IMR-90 (cell line): ENCODE measurements at regions of chr2 and their contacts with region 1.

Region 1: DNA sequence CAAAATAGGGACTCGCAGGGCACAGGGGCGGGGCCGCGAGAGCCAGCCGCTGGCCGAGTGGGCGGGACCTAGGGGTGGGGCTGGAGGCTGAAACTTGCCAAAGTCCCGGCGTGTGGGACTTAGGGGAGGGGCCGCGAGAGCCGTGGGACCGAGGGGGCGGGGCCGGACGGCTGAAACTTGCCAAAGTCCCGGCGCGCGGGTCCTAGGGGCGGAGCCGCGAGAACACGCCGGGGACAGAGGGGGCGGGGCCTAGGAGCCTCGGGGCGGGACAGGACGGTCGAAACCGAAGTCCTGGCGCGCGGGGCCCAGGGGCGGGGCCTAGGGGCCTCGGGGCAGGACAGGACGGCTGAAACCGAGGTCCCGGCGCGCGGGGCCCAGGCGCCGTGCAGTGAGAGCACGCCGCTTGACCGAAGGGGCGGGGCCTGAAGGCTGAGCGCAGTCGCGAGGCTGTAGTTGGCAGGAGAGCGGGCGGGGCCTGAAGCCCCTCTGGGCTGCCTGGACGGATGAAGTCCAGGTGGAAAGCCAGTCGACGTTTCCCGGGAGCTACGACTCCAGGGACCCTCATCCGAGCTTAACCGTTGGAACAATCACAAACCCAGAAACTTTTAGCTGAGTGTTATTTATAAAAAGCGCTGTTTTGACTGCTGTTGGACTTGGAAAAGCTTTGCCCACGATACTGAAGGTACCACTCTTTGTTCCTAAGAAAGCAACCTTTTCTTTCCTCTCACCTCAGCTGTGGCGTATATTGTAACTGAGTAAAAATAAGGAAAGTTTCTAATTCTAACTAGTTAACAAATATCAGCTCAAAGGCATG is 475 bp upstream of the BARD1 start:
- DNase-seq: peak; percentile 97
- ATAC-seq: peak; percentile 96
- H3K4me3 ChIP-seq: peak overlapping the region; percentile 99
- H3K27ac ChIP-seq: peak overlapping the region; percentile 27
- H3K4me1 ChIP-seq: peaks cover 2% of the 10 kb centered on the region; the same call in 1 of the 2 replicates
- H3K27me3 ChIP-seq: no peaks in the 10 kb centered on the region
- CTCF ChIP-seq: no peak
- POLR2A ChIP-seq: no peak
- RAD21 ChIP-seq: no peak

Region 2: DNA sequence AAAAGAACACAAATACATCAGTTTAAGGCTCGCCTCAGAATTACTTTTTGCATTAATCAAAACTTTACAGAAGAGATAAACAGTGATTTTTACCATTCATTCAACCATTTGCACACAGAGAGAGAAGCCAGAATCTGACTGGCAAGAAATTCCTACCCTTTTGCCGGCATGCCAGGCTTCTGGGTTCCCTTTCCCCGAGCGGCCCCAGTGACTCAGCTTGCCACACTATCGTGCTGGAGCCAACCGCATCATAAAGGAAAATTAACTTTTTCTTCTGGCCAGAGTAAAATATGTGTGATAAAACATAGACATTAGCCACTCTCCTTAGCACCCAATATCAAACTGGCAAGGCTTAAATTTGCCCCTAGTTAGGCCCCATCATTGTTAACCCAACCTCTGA is 1596.8 kb before region 1 on chr2:
- CTCF ChIA-PET with region 1: no interaction called
- POLR2A ChIA-PET with region 1: interaction called, 11 read pairs
- dilution Hi-C with region 1: no loop called
- in situ Hi-C with region 1: no loop called
- intact Hi-C with region 1: no loop called
- DNase-seq: no peak
- ATAC-seq: no peak
- H3K4me3 ChIP-seq: no peak overlapping the region
- H3K27ac ChIP-seq: no peak overlapping the region
- H3K4me1 ChIP-seq: no peaks in the 10 kb centered on the region
- H3K27me3 ChIP-seq: no peaks in the 10 kb centered on the region
- CTCF ChIP-seq: no peak
- POLR2A ChIP-seq: no peak
- RAD21 ChIP-seq: no peak

Region 3: GRCh38 chr2:213806125-213806726 is 1003.7 kb before region 1 on chr2:
- CTCF ChIA-PET with region 1: no interaction called
- POLR2A ChIA-PET with region 1: no interaction called
- dilution Hi-C with region 1: no loop called
- in situ Hi-C with region 1: loop called (anchors 25 kb)
- intact Hi-C with region 1: loop called (anchors 5 kb)
- DNase-seq: peak; percentile 38
- ATAC-seq: no peak; the same call in 1 of the 2 replicates
- H3K4me3 ChIP-seq: no peak overlapping the region
- H3K27ac ChIP-seq: no peak overlapping the region
- H3K4me1 ChIP-seq: no peaks in the 10 kb centered on the region
- H3K27me3 ChIP-seq: no peaks in the 10 kb centered on the region
- CTCF ChIP-seq: peak; percentile 48
- POLR2A ChIP-seq: no peak
- RAD21 ChIP-seq: peak; percentile 59

Region 4: DNA sequence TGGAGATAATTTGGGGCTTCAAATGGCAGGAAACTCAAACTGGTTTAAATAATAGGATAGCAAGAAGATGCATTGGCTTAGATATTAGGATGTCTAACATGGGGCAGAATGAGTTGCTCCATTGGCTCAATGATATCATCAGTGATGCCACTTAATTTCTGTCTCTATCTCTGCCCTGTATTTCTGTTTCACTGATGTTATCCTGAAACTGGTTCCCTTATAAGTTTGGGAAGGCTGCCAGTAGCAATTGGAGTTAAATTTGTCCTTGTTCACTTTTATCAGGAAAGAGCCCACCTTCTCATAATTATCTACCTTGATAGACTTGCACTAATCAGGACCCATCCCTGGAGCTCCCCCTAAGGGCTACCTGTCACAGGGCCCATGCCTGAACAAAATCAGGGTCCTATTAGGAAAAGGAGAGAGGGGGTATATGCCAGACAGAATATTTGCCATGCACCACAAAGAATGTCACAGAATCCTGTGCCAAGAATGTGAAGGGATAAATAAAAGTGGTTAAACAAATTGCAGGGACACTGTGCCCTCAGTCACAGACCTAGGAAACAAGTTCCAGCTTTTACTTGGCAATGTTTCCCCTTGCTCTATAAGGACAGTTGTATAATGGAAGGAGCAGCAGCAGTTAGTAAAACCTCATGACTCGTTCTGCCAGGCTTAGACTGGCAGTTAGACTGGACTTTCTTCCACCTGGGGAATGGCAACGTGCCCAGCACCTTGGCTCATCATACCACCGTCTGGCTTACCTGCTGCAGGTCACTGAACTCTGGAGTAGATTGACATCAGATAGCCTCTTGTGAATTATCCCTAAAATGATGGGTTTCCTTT is 431.5 kb before region 1 on chr2:
- CTCF ChIA-PET with region 1: no interaction called
- POLR2A ChIA-PET with region 1: no interaction called
- dilution Hi-C with region 1: no loop called
- in situ Hi-C with region 1: no loop called
- intact Hi-C with region 1: no loop called
- DNase-seq: no peak
- ATAC-seq: no peak
- H3K4me3 ChIP-seq: no peak overlapping the region
- H3K27ac ChIP-seq: no peak overlapping the region
- H3K4me1 ChIP-seq: no peaks in the 10 kb centered on the region
- H3K27me3 ChIP-seq: no peaks in the 10 kb centered on the region
- CTCF ChIP-seq: no peak
- POLR2A ChIP-seq: no peak
- RAD21 ChIP-seq: no peak

Region 5: GRCh38 chr2:214436470-214436869 is 373.5 kb before region 1 on chr2:
- CTCF ChIA-PET with region 1: no interaction called
- POLR2A ChIA-PET with region 1: no interaction called
- dilution Hi-C with region 1: no loop called
- in situ Hi-C with region 1: no loop called
- intact Hi-C with region 1: loop called (anchors 10 kb)
- DNase-seq: no peak
- ATAC-seq: no peak
- H3K4me3 ChIP-seq: no peak overlapping the region
- H3K27ac ChIP-seq: no peak overlapping the region
- H3K4me1 ChIP-seq: no peaks in the 10 kb centered on the region
- H3K27me3 ChIP-seq: no peaks in the 10 kb centered on the region
- CTCF ChIP-seq: 0 out of 2 replicates have a peak, but pooled peaks have one; percentile 2
- POLR2A ChIP-seq: no peak
- RAD21 ChIP-seq: 0 out of 2 replicates have a peak, but pooled peaks have one; percentile 6

Region 6: GRCh38 chr2:214543386-214543965 is 266.5 kb before region 1 on chr2:
- CTCF ChIA-PET with region 1: no interaction called
- POLR2A ChIA-PET with region 1: no interaction called
- dilution Hi-C with region 1: no loop called
- in situ Hi-C with region 1: no loop called
- intact Hi-C with region 1: loop called (anchors 2 kb)
- DNase-seq: peak; percentile 66
- ATAC-seq: peak; percentile 65
- H3K4me3 ChIP-seq: no peak overlapping the region
- H3K27ac ChIP-seq: peak overlapping the region; percentile 37; the same call in 1 of the 2 replicates
- H3K4me1 ChIP-seq: peaks cover 6% of the 10 kb centered on the region
- H3K27me3 ChIP-seq: no peaks in the 10 kb centered on the region
- CTCF ChIP-seq: no peak
- POLR2A ChIP-seq: no peak
- RAD21 ChIP-seq: no peak

Region 7: GRCh38 chr2:214740868-214741395 is 69.0 kb before region 1 on chr2:
- CTCF ChIA-PET with region 1: interaction called, 6 read pairs
- POLR2A ChIA-PET with region 1: no interaction called
- dilution Hi-C with region 1: no loop called
- in situ Hi-C with region 1: no loop called
- intact Hi-C with region 1: loop called (anchors 5 kb)
- DNase-seq: no peak
- ATAC-seq: no peak
- H3K4me3 ChIP-seq: no peak overlapping the region
- H3K27ac ChIP-seq: no peak overlapping the region
- H3K4me1 ChIP-seq: 0 out of 2 replicates have a peak, but pooled peaks cover 2% of the 10 kb centered on the region
- H3K27me3 ChIP-seq: no peaks in the 10 kb centered on the region
- CTCF ChIP-seq: no peak
- POLR2A ChIP-seq: no peak
- RAD21 ChIP-seq: no peak

Region 8: DNA sequence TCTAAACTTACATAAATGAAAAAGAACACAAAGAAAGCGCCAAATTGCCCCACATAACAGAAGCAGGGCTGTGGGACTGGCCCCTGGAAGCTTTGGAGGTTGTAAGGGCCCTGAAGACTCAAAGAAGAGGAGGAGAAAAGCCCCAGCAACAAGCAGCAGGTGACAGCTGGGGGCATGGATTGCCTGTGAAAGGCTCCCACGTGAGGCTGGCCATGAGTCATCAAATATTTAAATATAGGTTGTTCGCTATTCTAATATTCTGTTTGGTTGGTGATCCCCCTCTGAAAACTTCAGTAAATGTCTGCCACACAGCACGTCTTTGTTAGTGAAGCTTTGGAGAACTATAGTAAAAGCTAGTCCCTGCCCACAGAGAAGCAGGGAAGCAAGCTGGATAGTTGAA is 1071.0 kb after region 1 on chr2:
- CTCF ChIA-PET with region 1: no interaction called
- POLR2A ChIA-PET with region 1: no interaction called
- dilution Hi-C with region 1: no loop called
- in situ Hi-C with region 1: no loop called
- intact Hi-C with region 1: no loop called
- DNase-seq: peak; percentile 47
- ATAC-seq: no peak
- H3K4me3 ChIP-seq: no peak overlapping the region
- H3K27ac ChIP-seq: no peak overlapping the region
- H3K4me1 ChIP-seq: peaks cover 10% of the 10 kb centered on the region
- H3K27me3 ChIP-seq: no peaks in the 10 kb centered on the region
- CTCF ChIP-seq: no peak
- POLR2A ChIP-seq: no peak
- RAD21 ChIP-seq: no peak